Activated CD4-positive, alpha-beta memory T cell treated with anti-CD3 and anti-CD28 coated beads for 36 hours (primary cell): ENCODE measurements at regions of chr17 and their contacts with region 1.

Region 1: GRCh38 chr17:55356434-55357328 is 65.0 kb downstream of the MMD start:
- DNase-seq: peak; percentile 81
- H3K4me3 Mint-ChIP-seq: no peak overlapping the region
- H3K27ac Mint-ChIP-seq: no peak overlapping the region
- H3K4me1 Mint-ChIP-seq: peaks cover 2% of the 10 kb centered on the region
- H3K27me3 Mint-ChIP-seq: peaks cover 4% of the 10 kb centered on the region

Region 2: DNA sequence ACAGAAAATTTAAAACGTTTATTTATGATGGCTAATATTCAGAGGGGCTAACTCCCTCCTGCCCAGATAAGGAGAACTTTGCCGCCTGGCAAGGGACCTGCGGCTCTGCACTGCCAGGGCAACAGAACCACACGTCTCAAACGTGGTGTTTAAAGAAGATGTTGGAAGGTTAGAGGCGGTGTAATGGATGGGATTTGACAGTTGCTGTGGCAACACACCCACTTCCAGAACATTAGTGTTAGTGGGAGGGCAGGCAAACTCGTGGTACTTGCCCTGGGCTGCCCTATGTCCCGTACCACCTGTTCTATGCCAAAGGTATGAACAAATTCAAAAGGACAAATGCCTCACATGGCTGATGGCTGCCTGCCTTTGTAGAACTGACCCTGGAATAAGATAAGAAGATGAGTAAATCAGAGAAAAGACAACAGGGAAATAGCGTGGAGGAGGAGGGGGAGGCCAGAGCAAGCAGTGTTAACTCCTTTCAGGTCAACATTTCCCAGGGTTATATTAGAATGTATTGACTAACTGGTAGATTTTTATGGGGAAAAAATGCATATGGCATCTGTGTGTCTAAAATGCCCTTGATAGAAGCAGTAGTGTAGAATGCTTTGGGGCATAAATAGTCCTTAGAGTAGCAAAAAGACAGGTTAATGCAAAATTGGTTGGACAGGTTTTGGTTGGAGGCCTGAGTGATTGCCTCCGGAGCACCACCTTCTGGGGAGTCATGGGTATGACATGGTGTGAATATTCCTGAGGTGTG is 61.1 kb before region 1 on chr17:
- CTCF ChIA-PET with region 1: interaction called, 14 read pairs
- POLR2A ChIA-PET with region 1: no interaction called
- intact Hi-C with region 1: no loop called
- DNase-seq: peak; percentile 72
- H3K4me3 Mint-ChIP-seq: no peak overlapping the region
- H3K27ac Mint-ChIP-seq: no peak overlapping the region
- H3K4me1 Mint-ChIP-seq: peaks cover under 1% of the 10 kb centered on the region
- H3K27me3 Mint-ChIP-seq: no peaks in the 10 kb centered on the region

Region 3: DNA sequence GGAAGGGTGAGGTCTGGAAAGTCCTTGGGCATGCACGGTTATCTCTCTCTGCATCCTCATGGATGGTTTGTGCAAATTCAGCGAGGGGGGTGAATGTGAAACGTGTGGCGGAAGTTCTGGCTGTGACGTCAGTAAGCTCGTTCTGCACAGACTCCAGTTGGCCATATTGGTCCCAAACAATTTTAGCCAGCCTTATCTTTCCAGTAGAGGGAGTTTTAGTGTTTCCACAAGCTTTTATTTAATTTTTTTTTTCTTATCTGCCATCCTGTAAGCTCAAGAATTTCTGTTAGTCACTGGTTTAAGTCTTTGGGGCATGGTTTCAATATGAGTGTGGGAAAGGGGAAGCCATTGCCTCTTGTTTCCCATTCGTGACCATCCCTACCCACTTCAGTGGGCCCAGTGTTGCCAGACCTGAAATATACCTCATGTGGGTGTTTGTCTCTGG is 53.0 kb before region 1 on chr17:
- CTCF ChIA-PET with region 1: interaction called, 56 read pairs
- POLR2A ChIA-PET with region 1: no interaction called
- intact Hi-C with region 1: no loop called
- DNase-seq: peak; percentile 25
- H3K4me3 Mint-ChIP-seq: no peak overlapping the region
- H3K27ac Mint-ChIP-seq: no peak overlapping the region
- H3K4me1 Mint-ChIP-seq: peaks cover 9% of the 10 kb centered on the region
- H3K27me3 Mint-ChIP-seq: peaks cover 2% of the 10 kb centered on the region

Region 4: GRCh38 chr17:55341432-55341831 is 15.2 kb before region 1 on chr17:
- CTCF ChIA-PET with region 1: interaction called, 20 read pairs
- POLR2A ChIA-PET with region 1: no interaction called
- intact Hi-C with region 1: no loop called
- DNase-seq: peak; percentile 30
- H3K4me3 Mint-ChIP-seq: no peak overlapping the region
- H3K27ac Mint-ChIP-seq: no peak overlapping the region
- H3K4me1 Mint-ChIP-seq: peaks cover 46% of the 10 kb centered on the region
- H3K27me3 Mint-ChIP-seq: peaks cover 25% of the 10 kb centered on the region

Region 5: GRCh38 chr17:55513885-55514591 is 157.4 kb after region 1 on chr17:
- CTCF ChIA-PET with region 1: interaction called, 12 read pairs
- POLR2A ChIA-PET with region 1: no interaction called
- intact Hi-C with region 1: loop called (anchors 1 kb)
- DNase-seq: peak; percentile 75
- H3K4me3 Mint-ChIP-seq: no peak overlapping the region
- H3K27ac Mint-ChIP-seq: no peak overlapping the region
- H3K4me1 Mint-ChIP-seq: no peaks in the 10 kb centered on the region
- H3K27me3 Mint-ChIP-seq: peaks cover 6% of the 10 kb centered on the region